Naive thymus-derived CD4-positive, alpha-beta T cell (primary cell): ENCODE measurements at regions of chr1 and their contacts with region 1.

Region 1: DNA sequence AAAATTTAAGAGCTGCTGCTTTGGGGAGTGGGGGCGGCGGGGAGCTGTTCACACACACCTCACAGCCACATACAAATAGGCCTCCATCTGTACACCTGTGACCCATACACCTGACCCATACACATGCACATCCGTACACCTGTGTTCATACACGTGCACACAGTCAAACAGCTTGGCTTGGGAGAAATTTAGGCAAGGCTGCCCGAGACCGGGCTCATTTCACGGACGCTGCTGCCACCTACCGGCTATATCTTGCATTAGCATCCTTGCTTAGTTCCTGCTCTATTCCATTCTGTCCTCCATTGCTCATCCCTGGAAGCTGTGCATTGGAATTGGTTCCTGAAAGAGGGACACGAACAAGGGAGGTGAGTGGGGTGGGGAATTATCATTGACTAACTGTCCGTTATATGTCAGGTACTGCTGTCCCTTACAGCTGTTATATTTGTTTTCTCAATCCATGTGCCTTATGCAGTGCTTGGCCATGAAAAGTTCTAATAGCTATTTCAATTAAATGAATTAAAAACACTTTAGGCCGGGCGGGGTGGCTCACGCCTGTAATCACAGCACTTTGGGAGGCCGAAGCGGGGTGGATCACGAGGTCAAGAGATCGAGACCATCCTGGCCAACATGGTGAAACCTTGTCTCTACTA is 37.1 kb upstream of the EPB41 start:
- DNase-seq: peak; percentile 48 to 77 (median 67)
- ATAC-seq: peak; percentile 86
- H3K4me3 ChIP-seq: no peak overlapping the region
- H3K4me3 Mint-ChIP-seq: peak overlapping the region in 1 of 10 donors; percentile 32
- H3K27ac ChIP-seq: no peak overlapping the region
- H3K27ac Mint-ChIP-seq: no peak overlapping the region
- H3K4me1 ChIP-seq: no peaks in the 10 kb centered on the region
- H3K4me1 Mint-ChIP-seq: peaks cover 4 to 16% (median 7%) of the 10 kb centered on the region in 7 donors
- H3K27me3 ChIP-seq: no peaks in the 10 kb centered on the region
- H3K27me3 Mint-ChIP-seq: peaks cover 0 to 17% (median 5%) of the 10 kb centered on the region in 5 donors

Region 2: DNA sequence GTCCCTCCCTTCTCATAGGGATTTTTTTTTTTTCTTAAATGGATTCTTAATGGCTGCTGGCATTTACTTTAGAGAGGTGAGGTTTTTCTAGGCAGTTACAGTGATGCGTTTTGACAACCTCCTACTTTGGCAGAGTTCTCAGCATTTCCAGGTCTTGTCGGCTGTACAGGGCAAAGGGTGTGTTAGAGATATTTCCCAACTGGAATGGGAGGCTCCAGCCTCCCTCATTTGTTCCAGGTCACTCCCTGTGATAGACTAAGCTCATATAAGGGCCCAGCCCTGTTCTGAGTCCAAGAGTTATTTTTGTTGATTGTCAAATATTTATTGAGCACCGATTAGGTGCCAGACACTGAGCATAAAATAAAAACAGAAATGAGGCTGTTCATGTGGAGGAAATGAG is 925.1 kb before region 1 on chr1:
- CTCF ChIA-PET with region 1: no interaction called
- POLR2A ChIA-PET with region 1: no interaction called
- intact Hi-C with region 1: no loop called
- DNase-seq: no peak
- ATAC-seq: no peak
- H3K4me3 ChIP-seq: no peak overlapping the region
- H3K4me3 Mint-ChIP-seq: no peak overlapping the region
- H3K27ac ChIP-seq: no peak overlapping the region
- H3K27ac Mint-ChIP-seq: peak overlapping the region in 1 of 9 donors; percentile 23
- H3K4me1 ChIP-seq: no peaks in the 10 kb centered on the region
- H3K4me1 Mint-ChIP-seq: peaks cover 0 to 4% (median 2%) of the 10 kb centered on the region in 7 donors
- H3K27me3 ChIP-seq: no peaks in the 10 kb centered on the region
- H3K27me3 Mint-ChIP-seq: peaks cover 0 to 10% (median 0%) of the 10 kb centered on the region in 5 donors

Region 3: DNA sequence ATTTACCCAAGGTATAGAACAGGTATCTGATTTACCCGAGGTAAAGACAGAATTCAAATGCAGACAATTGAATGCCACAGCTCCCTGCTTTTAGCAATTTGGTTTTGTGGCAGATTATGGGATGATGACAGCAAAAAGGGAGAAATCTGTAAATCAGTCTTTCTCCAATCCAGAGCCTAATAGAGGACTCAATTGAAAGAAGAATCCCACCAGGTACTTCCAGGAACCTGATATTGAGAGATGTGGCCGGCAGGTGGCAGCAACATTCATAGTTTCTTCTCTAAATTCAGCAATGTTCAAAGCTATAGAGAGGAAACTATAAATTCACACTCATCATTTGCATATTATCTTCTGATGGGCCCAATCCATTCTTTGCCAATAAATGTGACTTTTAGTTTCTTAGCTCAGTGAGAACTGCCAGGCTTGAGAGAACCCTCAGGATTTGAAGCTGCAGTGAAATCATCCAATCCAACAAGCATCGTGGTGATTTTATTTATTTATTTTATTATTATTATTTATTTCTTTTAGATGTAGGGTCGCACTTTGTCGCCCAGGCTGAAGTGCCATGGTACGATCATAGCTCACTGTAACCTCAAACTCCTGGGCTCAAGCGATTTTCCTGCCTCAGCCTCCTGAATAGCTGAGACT is 517.5 kb before region 1 on chr1:
- CTCF ChIA-PET with region 1: interaction called, 29 read pairs
- POLR2A ChIA-PET with region 1: no interaction called
- intact Hi-C with region 1: loop called in 1 of 2 experiments (anchors 1 kb)
- DNase-seq: peak; percentile 26 to 67 (median 54)
- ATAC-seq: peak; percentile 80
- H3K4me3 ChIP-seq: no peak overlapping the region
- H3K4me3 Mint-ChIP-seq: no peak overlapping the region
- H3K27ac ChIP-seq: no peak overlapping the region
- H3K27ac Mint-ChIP-seq: no peak overlapping the region
- H3K4me1 ChIP-seq: no peaks in the 10 kb centered on the region
- H3K4me1 Mint-ChIP-seq: peaks cover 0 to 4% (median 0%) of the 10 kb centered on the region in 7 donors
- H3K27me3 ChIP-seq: no peaks in the 10 kb centered on the region
- H3K27me3 Mint-ChIP-seq: peaks cover 0 to 9% (median 0%) of the 10 kb centered on the region in 5 donors

Region 4: DNA sequence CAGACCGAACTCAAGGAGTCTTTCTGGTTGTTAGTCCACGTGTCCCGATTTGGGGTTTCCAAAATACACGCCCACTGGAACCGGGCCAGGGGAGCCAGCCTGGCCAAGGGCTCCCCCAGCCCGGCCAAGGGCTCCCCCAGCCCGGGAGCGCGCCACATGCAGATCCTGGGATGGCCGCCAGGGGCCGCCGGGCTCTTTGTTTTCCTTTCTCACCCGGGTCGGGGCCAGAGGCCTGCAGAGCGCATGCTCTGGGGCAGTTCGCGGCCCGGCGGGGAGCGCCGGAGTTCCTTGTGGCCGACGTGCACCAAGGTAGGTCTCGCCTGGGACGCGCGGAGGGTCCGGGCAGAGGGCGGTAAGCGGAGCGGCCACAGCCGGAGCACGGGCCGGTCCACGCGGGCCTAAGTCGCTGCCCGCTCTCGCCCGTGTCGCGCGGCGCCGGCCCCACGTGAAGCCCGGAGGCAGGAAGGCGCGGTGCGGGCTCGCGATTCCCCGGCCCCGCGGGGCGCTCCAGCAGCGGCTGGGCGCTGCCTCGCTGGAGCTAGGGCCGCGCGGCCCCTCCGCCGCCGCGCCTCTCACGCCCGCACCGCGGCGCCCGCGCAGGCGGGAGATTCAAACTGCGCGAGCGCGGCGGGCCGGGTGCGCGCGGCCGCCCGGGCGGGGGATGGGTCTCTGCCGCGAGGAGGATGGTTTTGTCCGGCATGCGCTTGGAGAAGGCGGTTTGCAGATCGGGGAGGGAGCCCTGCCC is 359.1 kb before region 1 on chr1:
- CTCF ChIA-PET with region 1: interaction called, 6 read pairs
- POLR2A ChIA-PET with region 1: no interaction called
- intact Hi-C with region 1: loop called (anchors 1 to 2 kb)
- DNase-seq: peak; percentile 77 to 94 (median 84)
- ATAC-seq: peak; percentile 95
- H3K4me3 ChIP-seq: peak overlapping the region; percentile 81
- H3K4me3 Mint-ChIP-seq: peak overlapping the region; percentile 76 to 91 (median 88)
- H3K27ac ChIP-seq: peak overlapping the region; percentile 76
- H3K27ac Mint-ChIP-seq: peak overlapping the region; percentile 59 to 91 (median 83)
- H3K4me1 ChIP-seq: peaks cover 9 to 10% of the 10 kb centered on the region in 2 donors
- H3K4me1 Mint-ChIP-seq: peaks cover 16 to 46% (median 23%) of the 10 kb centered on the region in 7 donors
- H3K27me3 ChIP-seq: no peaks in the 10 kb centered on the region
- H3K27me3 Mint-ChIP-seq: no peaks in the 10 kb centered on the region

Region 5: DNA sequence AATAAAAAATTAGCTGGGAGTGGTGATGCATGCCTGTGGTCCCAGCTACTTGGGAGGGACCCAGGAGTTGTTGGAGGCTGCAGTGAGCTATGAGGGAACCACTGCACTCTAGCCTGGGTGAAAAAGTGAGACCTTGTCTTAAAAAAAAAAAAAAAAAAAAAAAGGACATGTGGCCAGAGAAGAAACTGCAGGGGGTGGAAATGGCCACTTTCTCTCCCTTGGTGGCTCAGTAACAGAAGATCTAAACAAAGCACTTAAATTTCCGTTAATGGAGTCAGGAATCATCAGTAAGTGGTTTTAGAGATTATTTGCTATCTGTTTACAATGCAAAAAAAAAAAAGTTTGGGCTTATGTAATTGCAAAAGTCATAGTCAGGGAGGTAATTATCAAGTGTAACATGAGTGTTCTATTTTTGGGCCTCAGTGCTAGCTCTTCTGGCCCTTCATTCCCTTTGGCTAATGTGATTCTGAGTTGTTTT is 84.6 kb before region 1 on chr1:
- CTCF ChIA-PET with region 1: interaction called, 11 read pairs
- POLR2A ChIA-PET with region 1: no interaction called
- intact Hi-C with region 1: no loop called
- DNase-seq: no peak
- ATAC-seq: no peak
- H3K4me3 ChIP-seq: no peak overlapping the region
- H3K4me3 Mint-ChIP-seq: no peak overlapping the region
- H3K27ac ChIP-seq: no peak overlapping the region
- H3K27ac Mint-ChIP-seq: no peak overlapping the region
- H3K4me1 ChIP-seq: no peaks in the 10 kb centered on the region
- H3K4me1 Mint-ChIP-seq: peaks cover 0 to 5% (median 0%) of the 10 kb centered on the region in 7 donors
- H3K27me3 ChIP-seq: no peaks in the 10 kb centered on the region
- H3K27me3 Mint-ChIP-seq: peaks cover 0 to 39% (median 0%) of the 10 kb centered on the region in 5 donors

Region 6: DNA sequence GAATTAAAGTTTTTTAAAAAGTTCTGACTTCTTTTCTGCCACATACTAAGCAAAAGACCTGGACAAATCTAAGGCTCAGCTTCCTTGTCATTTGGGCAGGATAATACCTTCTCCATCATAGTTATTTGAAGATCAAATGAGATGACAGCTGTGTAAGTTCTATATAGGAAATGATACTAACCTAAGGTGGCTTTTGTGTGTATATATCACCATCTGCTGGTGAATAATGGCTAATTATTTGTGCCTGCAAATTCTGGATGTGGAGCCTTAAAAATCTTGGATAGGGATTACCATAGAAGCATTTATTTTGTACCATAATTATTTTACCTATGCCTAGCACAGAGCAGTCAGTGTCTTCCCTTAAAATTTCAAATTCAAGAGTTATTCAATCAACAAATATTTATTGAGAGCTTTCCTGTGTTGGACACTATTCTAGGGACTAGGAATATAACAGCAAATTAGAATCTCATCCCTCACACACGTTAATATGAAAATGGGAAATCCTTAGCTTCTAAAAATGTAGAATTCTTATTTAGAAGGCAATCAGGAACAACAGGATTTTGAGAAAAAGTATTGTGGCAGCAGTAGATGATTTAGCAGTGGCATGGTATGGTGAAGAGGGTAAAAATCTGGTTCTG is 156.7 kb after region 1 on chr1:
- CTCF ChIA-PET with region 1: interaction called, 105 read pairs
- POLR2A ChIA-PET with region 1: interaction called, 5 read pairs
- intact Hi-C with region 1: loop called (anchors 1 kb)
- DNase-seq: peak in 7 of 9 donors; percentile 9 to 44 (median 30)
- ATAC-seq: peak; percentile 75
- H3K4me3 ChIP-seq: no peak overlapping the region
- H3K4me3 Mint-ChIP-seq: no peak overlapping the region
- H3K27ac ChIP-seq: no peak overlapping the region
- H3K27ac Mint-ChIP-seq: peak overlapping the region in 3 of 9 donors; percentile 18 to 64 (median 48)
- H3K4me1 ChIP-seq: no peaks in the 10 kb centered on the region
- H3K4me1 Mint-ChIP-seq: peaks cover 0 to 3% (median 0%) of the 10 kb centered on the region in 7 donors
- H3K27me3 ChIP-seq: no peaks in the 10 kb centered on the region
- H3K27me3 Mint-ChIP-seq: no peaks in the 10 kb centered on the region

Region 7: GRCh38 chr1:29083317-29084195 is 206.3 kb after region 1 on chr1:
- CTCF ChIA-PET with region 1: no interaction called
- POLR2A ChIA-PET with region 1: no interaction called
- intact Hi-C with region 1: no loop called
- DNase-seq: no peak
- ATAC-seq: no peak
- H3K4me3 ChIP-seq: no peak overlapping the region
- H3K4me3 Mint-ChIP-seq: no peak overlapping the region
- H3K27ac ChIP-seq: no peak overlapping the region
- H3K27ac Mint-ChIP-seq: no peak overlapping the region
- H3K4me1 ChIP-seq: no peaks in the 10 kb centered on the region
- H3K4me1 Mint-ChIP-seq: peaks cover 0 to 2% (median 0%) of the 10 kb centered on the region in 7 donors
- H3K27me3 ChIP-seq: no peaks in the 10 kb centered on the region
- H3K27me3 Mint-ChIP-seq: no peaks in the 10 kb centered on the region